Pancreas (tissue), 10 donors: ENCODE measurements at regions of chrX and their contacts with region 1.

Region 1: GRCh38 chrX:50100188-50100587 is 100.6 kb downstream of the AKAP4 start:
- DNase-seq: no peak
- ATAC-seq: peak in 3 of 4 donors; percentile 66 to 69 (median 66)
- H3K4me3 ChIP-seq: no peak overlapping the region
- H3K27ac ChIP-seq: no peak overlapping the region
- H3K4me1 ChIP-seq: no peaks in the 10 kb centered on the region
- H3K27me3 ChIP-seq: no peaks in the 10 kb centered on the region
- CTCF ChIP-seq: no peak

Region 2: DNA sequence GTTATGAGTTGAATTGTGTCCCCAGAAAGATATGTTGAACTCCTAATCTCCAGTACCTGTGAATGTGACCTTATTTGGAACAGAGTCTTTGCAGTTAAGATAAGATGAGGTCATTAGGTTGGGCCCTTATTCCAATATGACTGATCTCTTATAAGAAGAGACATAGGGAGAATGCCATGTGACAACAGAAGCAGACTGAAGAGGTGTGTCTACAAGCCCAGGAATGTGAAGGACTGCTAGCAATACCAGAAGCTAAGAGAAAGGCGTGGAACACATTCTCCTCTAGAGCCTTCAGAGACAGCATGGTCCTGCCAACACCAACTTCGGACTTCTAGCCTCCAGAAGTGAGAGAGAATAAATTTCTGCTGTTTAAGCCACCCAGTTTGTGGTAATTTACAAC is 243.4 kb before region 1 on chrX:
- intact Hi-C with region 1: no loop called
- DNase-seq: no peak
- ATAC-seq: no peak
- H3K4me3 ChIP-seq: no peak overlapping the region
- H3K27ac ChIP-seq: no peak overlapping the region
- H3K4me1 ChIP-seq: no peaks in the 10 kb centered on the region
- H3K27me3 ChIP-seq: peaks cover 0 to 21% (median 0%) of the 10 kb centered on the region in 4 donors
- CTCF ChIP-seq: no peak

Region 3: GRCh38 chrX:50579955-50580354 is 479.8 kb after region 1 on chrX:
- intact Hi-C with region 1: loop called in 2 of 3 experiments (anchors 10 kb)
- DNase-seq: peak in 3 of 6 donors; percentile 7 to 55 (median 22)
- ATAC-seq: peak in 3 of 4 donors; percentile 83 to 88 (median 88)
- H3K4me3 ChIP-seq: no peak overlapping the region
- H3K27ac ChIP-seq: no peak overlapping the region
- H3K4me1 ChIP-seq: no peaks in the 10 kb centered on the region
- H3K27me3 ChIP-seq: peaks cover 0 to 5% (median 0%) of the 10 kb centered on the region in 4 donors
- CTCF ChIP-seq: peak; percentile 15 to 53 (median 34)